Naive thymus-derived CD4-positive, alpha-beta T cell (primary cell): ENCODE measurements at regions of chr9 and their contacts with region 1.

Region 1: GRCh38 chr9:75027187-75028107 is 646 bp downstream of the CARNMT1 start:
- DNase-seq: peak in 8 of 9 donors; percentile 27 to 66 (median 35)
- ATAC-seq: peak; percentile 18
- H3K4me3 ChIP-seq: peak overlapping the region; percentile 69
- H3K4me3 Mint-ChIP-seq: peak overlapping the region; percentile 80 to 98 (median 96)
- H3K27ac ChIP-seq: peak overlapping the region; percentile 90
- H3K27ac Mint-ChIP-seq: peak overlapping the region; percentile 84 to 98 (median 95)
- H3K4me1 ChIP-seq: peaks cover 34 to 42% of the 10 kb centered on the region in 2 donors
- H3K4me1 Mint-ChIP-seq: peaks cover 30 to 54% (median 48%) of the 10 kb centered on the region in 7 donors
- H3K27me3 ChIP-seq: no peaks in the 10 kb centered on the region
- H3K27me3 Mint-ChIP-seq: peaks cover 0 to 3% (median 0%) of the 10 kb centered on the region in 5 donors

Region 2: GRCh38 chr9:74322661-74323314 is 704.7 kb before region 1 on chr9:
- CTCF ChIA-PET with region 1: no interaction called
- POLR2A ChIA-PET with region 1: no interaction called
- intact Hi-C with region 1: loop called in 1 of 2 experiments (anchors 5 kb)
- DNase-seq: no peak
- ATAC-seq: no peak
- H3K4me3 ChIP-seq: no peak overlapping the region
- H3K4me3 Mint-ChIP-seq: peak overlapping the region in 2 of 10 donors; percentile 36 to 76
- H3K27ac ChIP-seq: no peak overlapping the region
- H3K27ac Mint-ChIP-seq: peak overlapping the region in 2 of 9 donors; percentile 26 to 81
- H3K4me1 ChIP-seq: no peaks in the 10 kb centered on the region
- H3K4me1 Mint-ChIP-seq: peaks cover 0 to 10% (median 0%) of the 10 kb centered on the region in 7 donors
- H3K27me3 ChIP-seq: no peaks in the 10 kb centered on the region
- H3K27me3 Mint-ChIP-seq: peaks cover 0 to 9% (median 0%) of the 10 kb centered on the region in 5 donors

Region 3: GRCh38 chr9:75013735-75014134 is 13.7 kb before region 1 on chr9:
- CTCF ChIA-PET with region 1: interaction called, 4 read pairs
- POLR2A ChIA-PET with region 1: interaction called, 16 read pairs
- intact Hi-C with region 1: loop called in 1 of 2 experiments (anchors 2 kb)
- DNase-seq: no peak
- ATAC-seq: no peak
- H3K4me3 ChIP-seq: no peak overlapping the region
- H3K4me3 Mint-ChIP-seq: peak overlapping the region in 4 of 10 donors; percentile 9 to 69 (median 42)
- H3K27ac ChIP-seq: no peak overlapping the region
- H3K27ac Mint-ChIP-seq: peak overlapping the region in 8 of 9 donors; percentile 21 to 88 (median 50)
- H3K4me1 ChIP-seq: peaks cover 9 to 21% of the 10 kb centered on the region in 2 donors
- H3K4me1 Mint-ChIP-seq: peaks cover 14 to 51% (median 38%) of the 10 kb centered on the region in 7 donors
- H3K27me3 ChIP-seq: no peaks in the 10 kb centered on the region
- H3K27me3 Mint-ChIP-seq: no peaks in the 10 kb centered on the region

Region 4: GRCh38 chr9:75088260-75088905 is 60.9 kb after region 1 on chr9 and contains the start of gene OSTF1:
- CTCF ChIA-PET with region 1: interaction called, 7 read pairs
- POLR2A ChIA-PET with region 1: interaction called, 40 read pairs
- intact Hi-C with region 1: loop called (anchors 1 kb)
- DNase-seq: peak; percentile 89 to 95 (median 95)
- ATAC-seq: peak; percentile 93
- H3K4me3 ChIP-seq: peak within 1 kb of the TSS; percentile 76
- H3K4me3 Mint-ChIP-seq: peak within 1 kb of the TSS; percentile 89 to 100 (median 99)
- H3K27ac ChIP-seq: peak within 1 kb of the TSS; percentile 92
- H3K27ac Mint-ChIP-seq: peak within 1 kb of the TSS; percentile 91 to 98 (median 94)
- H3K4me1 ChIP-seq: peaks cover 29 to 49% of the 10 kb centered on the region in 2 donors
- H3K4me1 Mint-ChIP-seq: peaks cover 58 to 82% (median 78%) of the 10 kb centered on the region in 7 donors
- H3K27me3 ChIP-seq: no peaks in the 10 kb centered on the region
- H3K27me3 Mint-ChIP-seq: no peaks in the 10 kb centered on the region
- total RNA-seq, gene OSTF1: 38.7 to 93.5 (median 46.2) TPM

Region 5: DNA sequence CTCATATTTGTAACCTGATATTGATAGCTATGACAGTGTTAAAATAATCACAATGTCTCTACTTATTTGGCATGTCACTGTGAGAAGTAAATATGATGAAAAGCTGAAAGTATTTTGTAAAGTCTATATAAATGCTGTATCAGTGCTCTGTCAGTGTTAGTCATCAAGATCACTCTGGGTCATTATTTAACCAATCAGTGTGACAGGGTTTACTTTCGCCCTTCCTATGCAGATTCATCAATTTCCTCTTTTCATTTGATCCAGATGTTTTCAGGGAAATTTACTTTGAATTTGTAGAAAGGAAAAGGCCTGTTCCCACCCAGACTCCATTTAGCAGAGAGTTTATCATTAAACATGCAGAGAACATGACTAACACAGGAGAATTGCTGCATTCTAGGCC is 853.2 kb after region 1 on chr9:
- CTCF ChIA-PET with region 1: no interaction called
- POLR2A ChIA-PET with region 1: no interaction called
- intact Hi-C with region 1: no loop called
- DNase-seq: no peak
- ATAC-seq: peak; percentile 26
- H3K4me3 ChIP-seq: no peak overlapping the region
- H3K4me3 Mint-ChIP-seq: no peak overlapping the region
- H3K27ac ChIP-seq: no peak overlapping the region
- H3K27ac Mint-ChIP-seq: no peak overlapping the region
- H3K4me1 ChIP-seq: no peaks in the 10 kb centered on the region
- H3K4me1 Mint-ChIP-seq: peaks cover 0 to 10% (median 0%) of the 10 kb centered on the region in 7 donors
- H3K27me3 ChIP-seq: no peaks in the 10 kb centered on the region
- H3K27me3 Mint-ChIP-seq: peaks cover 0 to 5% (median 3%) of the 10 kb centered on the region in 5 donors

Region 6: DNA sequence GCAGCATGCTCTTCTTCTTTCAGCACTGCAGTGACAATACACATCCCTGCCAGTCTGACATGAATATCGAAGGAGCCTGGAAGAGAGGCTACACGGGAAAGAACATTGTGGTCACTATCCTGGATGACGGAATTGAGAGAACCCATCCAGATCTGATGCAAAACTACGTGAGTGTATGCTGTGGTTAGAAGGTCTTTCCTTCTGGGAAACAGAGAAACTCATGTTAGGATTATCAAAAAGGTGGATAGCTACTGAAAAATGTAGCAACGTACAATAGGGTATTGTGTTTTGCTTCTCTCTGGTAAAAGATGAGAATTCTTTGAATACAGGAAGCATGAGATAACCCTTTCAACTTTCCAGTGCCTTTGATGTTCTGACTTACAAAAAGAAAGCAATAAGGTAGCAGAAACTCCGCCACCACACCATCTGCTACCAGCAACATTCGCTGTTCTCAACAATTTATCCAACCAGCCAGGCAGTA is 996.3 kb after region 1 on chr9:
- CTCF ChIA-PET with region 1: no interaction called
- POLR2A ChIA-PET with region 1: no interaction called
- intact Hi-C with region 1: loop called in 1 of 2 experiments (anchors 5 kb)
- DNase-seq: peak in 7 of 9 donors; percentile 69 to 87 (median 81)
- ATAC-seq: peak; percentile 93
- H3K4me3 ChIP-seq: peak overlapping the region; percentile 38
- H3K4me3 Mint-ChIP-seq: peak overlapping the region; percentile 68 to 86 (median 80)
- H3K27ac ChIP-seq: peak overlapping the region; percentile 76
- H3K27ac Mint-ChIP-seq: peak overlapping the region; percentile 77 to 99 (median 96)
- H3K4me1 ChIP-seq: peaks cover 10 to 96% of the 10 kb centered on the region in 2 donors
- H3K4me1 Mint-ChIP-seq: peaks cover 59 to 100% (median 98%) of the 10 kb centered on the region in 7 donors
- H3K27me3 ChIP-seq: no peaks in the 10 kb centered on the region
- H3K27me3 Mint-ChIP-seq: no peaks in the 10 kb centered on the region